CD14-positive monocyte (primary cell): ENCODE measurements at regions of chr6 and their contacts with region 1.

Region 1: DNA sequence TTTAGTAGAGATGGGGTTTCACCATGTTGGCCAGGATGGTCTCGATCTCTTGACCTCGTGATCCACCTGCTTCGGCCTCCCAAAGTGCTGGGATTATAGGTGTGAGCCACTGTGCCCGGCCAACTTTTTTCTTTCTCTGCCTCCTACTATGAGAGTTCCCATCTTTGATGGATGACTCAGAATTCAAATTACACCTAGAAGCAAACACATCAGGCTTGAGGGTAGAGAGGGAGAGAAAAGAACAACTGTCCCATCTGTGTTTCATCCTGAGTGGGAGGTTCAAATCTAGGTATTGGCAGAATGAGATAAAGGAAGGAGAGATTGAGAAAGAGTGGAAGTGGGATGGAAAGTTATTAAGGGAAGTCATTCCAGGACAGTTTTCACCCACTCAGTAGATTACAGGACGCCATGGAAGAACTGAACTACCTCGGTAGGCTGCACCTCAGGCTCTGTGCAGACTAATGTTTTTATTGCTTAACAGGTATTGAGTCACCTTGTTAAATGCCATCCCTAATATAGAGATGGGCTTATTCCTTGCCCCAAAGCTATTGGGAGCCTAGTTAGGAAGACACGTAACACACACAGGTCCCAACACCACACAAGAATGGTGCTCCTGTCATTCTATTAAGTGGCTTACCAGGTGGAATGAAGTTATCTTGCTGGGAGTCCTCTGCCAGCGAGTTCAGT is 275.7 kb downstream of the SOX4 start:
- DNase-seq: no peak
- H3K4me3 ChIP-seq: no peak overlapping the region
- H3K4me3 Mint-ChIP-seq: no peak overlapping the region
- H3K27ac ChIP-seq: no peak overlapping the region
- H3K27ac Mint-ChIP-seq: no peak overlapping the region
- H3K4me1 ChIP-seq: no peaks in the 10 kb centered on the region
- H3K4me1 Mint-ChIP-seq: peaks cover 3% of the 10 kb centered on the region
- H3K27me3 ChIP-seq: no peaks in the 10 kb centered on the region
- H3K27me3 Mint-ChIP-seq: peaks cover 0 to 1% (median 0%) of the 10 kb centered on the region in 3 donors
- CTCF ChIP-seq: no peak

Region 2: GRCh38 chr6:21914121-21914973 is 45.1 kb after region 1 on chr6:
- intact Hi-C with region 1: loop called in 1 of 2 experiments (anchors 10 kb)
- DNase-seq: peak; percentile 20 to 59 (median 45)
- H3K4me3 ChIP-seq: peak overlapping the region; percentile 20 to 73 (median 68)
- H3K4me3 Mint-ChIP-seq: peak overlapping the region; percentile 74 to 82
- H3K27ac ChIP-seq: no peak overlapping the region
- H3K27ac Mint-ChIP-seq: peak overlapping the region in 3 of 7 donors; percentile 20 to 58 (median 35)
- H3K4me1 ChIP-seq: peaks cover 4 to 6% of the 10 kb centered on the region in 2 donors
- H3K4me1 Mint-ChIP-seq: peaks cover 15% of the 10 kb centered on the region
- H3K27me3 ChIP-seq: no peaks in the 10 kb centered on the region
- H3K27me3 Mint-ChIP-seq: peaks cover 0 to 2% (median 1%) of the 10 kb centered on the region in 3 donors
- CTCF ChIP-seq: no peak